ENCODE measurements at regions of chr18 and their contacts with region 1.

Region 1: GRCh38 chr18:58117786-58118403 is 73.9 kb downstream of the NEDD4L start:
- DNase-seq: no peak
- ATAC-seq: no peak
- H3K4me3 ChIP-seq: no peak overlapping the region
- H3K4me3 Mint-ChIP-seq: no peak overlapping the region
- H3K27ac ChIP-seq: no peak overlapping the region
- H3K27ac Mint-ChIP-seq: no peak overlapping the region
- H3K4me1 ChIP-seq: peaks cover 5 to 6% of the 10 kb centered on the region in 2 donors
- H3K4me1 Mint-ChIP-seq: peaks cover 7% of the 10 kb centered on the region
- H3K27me3 ChIP-seq: peaks cover 0 to 3% (median 0%) of the 10 kb centered on the region in 4 experiments
- H3K27me3 Mint-ChIP-seq: no peaks in the 10 kb centered on the region
- CTCF ChIP-seq: no peak

Region 2: DNA sequence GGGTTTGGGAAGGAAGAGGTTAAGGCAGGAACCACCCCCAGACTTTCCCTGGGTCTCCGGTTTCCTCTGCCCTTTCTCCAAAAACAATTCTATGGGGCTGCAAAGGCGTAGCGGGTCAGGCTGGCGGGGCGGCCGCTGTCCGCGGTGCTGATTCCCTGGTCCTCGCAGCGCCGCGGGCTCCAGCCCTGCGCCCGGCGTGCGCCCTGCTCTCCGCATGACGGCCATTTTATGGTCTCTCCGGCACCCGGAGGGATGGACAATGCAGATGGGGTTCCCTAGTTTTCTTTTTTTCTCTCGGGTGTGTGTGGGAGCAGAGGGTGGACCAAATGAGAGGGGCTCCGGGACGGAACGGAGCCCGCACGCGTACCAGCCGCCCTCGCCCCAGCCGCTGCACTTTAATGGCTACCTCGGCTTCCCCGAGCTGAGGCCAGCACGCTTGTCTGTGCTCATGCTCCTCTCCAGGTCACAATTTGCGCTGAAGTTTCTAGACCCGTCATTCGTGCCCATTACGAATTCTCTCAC is 763.9 kb before region 1 on chr18:
- CTCF ChIA-PET with region 1: no interaction called
- POLR2A ChIA-PET with region 1: no interaction called
- intact Hi-C with region 1: no loop called
- DNase-seq: no peak
- ATAC-seq: no peak
- H3K4me3 ChIP-seq: no peak overlapping the region
- H3K4me3 Mint-ChIP-seq: no peak overlapping the region
- H3K27ac ChIP-seq: no peak overlapping the region
- H3K27ac Mint-ChIP-seq: no peak overlapping the region
- H3K4me1 ChIP-seq: no peaks in the 10 kb centered on the region
- H3K4me1 Mint-ChIP-seq: no peaks in the 10 kb centered on the region
- H3K27me3 ChIP-seq: peaks cover 0 to 34% (median 16%) of the 10 kb centered on the region in 4 experiments
- H3K27me3 Mint-ChIP-seq: peaks cover 65% of the 10 kb centered on the region
- CTCF ChIP-seq: no peak

Region 3: GRCh38 chr18:58051765-58052460 is 66.0 kb before region 1 on chr18:
- CTCF ChIA-PET with region 1: interaction called, 12 read pairs
- POLR2A ChIA-PET with region 1: no interaction called
- intact Hi-C with region 1: no loop called
- DNase-seq: no peak
- ATAC-seq: peak; percentile 24
- H3K4me3 ChIP-seq: no peak overlapping the region
- H3K4me3 Mint-ChIP-seq: no peak overlapping the region
- H3K27ac ChIP-seq: no peak overlapping the region
- H3K27ac Mint-ChIP-seq: no peak overlapping the region
- H3K4me1 ChIP-seq: no peaks in the 10 kb centered on the region
- H3K4me1 Mint-ChIP-seq: peaks cover 9% of the 10 kb centered on the region
- H3K27me3 ChIP-seq: no peaks in the 10 kb centered on the region
- H3K27me3 Mint-ChIP-seq: no peaks in the 10 kb centered on the region
- CTCF ChIP-seq: peak; percentile 40

Region 4: GRCh38 chr18:58135701-58136331 is 17.9 kb after region 1 on chr18:
- CTCF ChIA-PET with region 1: interaction called, 19 read pairs
- POLR2A ChIA-PET with region 1: no interaction called
- intact Hi-C with region 1: no loop called
- DNase-seq: peak; percentile 75
- ATAC-seq: peak; percentile 71
- H3K4me3 ChIP-seq: no peak overlapping the region
- H3K4me3 Mint-ChIP-seq: peak overlapping the region; percentile 48
- H3K27ac ChIP-seq: no peak overlapping the region
- H3K27ac Mint-ChIP-seq: no peak overlapping the region
- H3K4me1 ChIP-seq: peaks cover 10 to 13% of the 10 kb centered on the region in 2 donors
- H3K4me1 Mint-ChIP-seq: peaks cover 19% of the 10 kb centered on the region
- H3K27me3 ChIP-seq: peaks cover 0 to 4% (median 0%) of the 10 kb centered on the region in 4 experiments
- H3K27me3 Mint-ChIP-seq: peaks cover 4% of the 10 kb centered on the region
- CTCF ChIP-seq: peak; percentile 87